Mammary epithelial cell (primary cell): ENCODE measurements at regions of chr1 and their contacts with region 1.

Region 1: GRCh38 chr1:183110326-183110865 is 75.7 kb upstream of the LAMC2 start:
- DNase-seq: no peak
- H3K4me3 ChIP-seq: no peak overlapping the region
- H3K27ac ChIP-seq: no peak overlapping the region
- H3K4me1 ChIP-seq: no peaks in the 10 kb centered on the region
- H3K27me3 ChIP-seq: no peaks in the 10 kb centered on the region
- CTCF ChIP-seq: no peak

Region 2: GRCh38 chr1:183058851-183059502 is 51.4 kb before region 1 on chr1:
- CTCF ChIA-PET with region 1: no interaction called
- dilution Hi-C with region 1: loop called (anchors 5 kb)
- in situ Hi-C with region 1: no loop called
- intact Hi-C with region 1: no loop called
- DNase-seq: no peak
- H3K4me3 ChIP-seq: no peak overlapping the region
- H3K27ac ChIP-seq: peak overlapping the region; percentile 3
- H3K4me1 ChIP-seq: peaks cover 20% of the 10 kb centered on the region
- H3K27me3 ChIP-seq: no peaks in the 10 kb centered on the region
- CTCF ChIP-seq: no peak